ENCODE measurements at regions of chrX and their contacts with region 1.

Region 1: DNA sequence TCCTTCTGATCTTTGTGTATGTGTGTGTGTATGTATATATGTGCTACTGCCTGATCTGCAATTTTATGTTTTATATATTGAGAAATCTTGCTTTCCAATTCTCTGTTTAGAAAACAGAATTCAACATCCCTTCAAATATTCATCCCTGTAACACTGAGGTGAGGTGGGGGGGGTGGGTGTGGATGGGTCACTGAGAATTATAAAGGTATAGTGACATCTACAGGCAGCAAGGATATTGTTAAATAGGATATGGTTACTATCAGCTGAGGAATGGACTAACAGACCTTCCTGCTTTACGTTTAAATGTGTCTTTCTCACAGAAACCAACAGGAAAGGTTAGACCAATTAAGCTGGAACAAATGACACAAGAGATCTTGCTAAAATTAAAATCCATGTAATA is 19.0 kb upstream of the MAGEB2 start:
- DNase-seq: no peak
- H3K4me3 ChIP-seq: no peak overlapping the region
- H3K27ac ChIP-seq: no peak overlapping the region
- H3K27me3 ChIP-seq: no peaks in the 10 kb centered on the region
- CTCF ChIP-seq: no peak

Region 2: GRCh38 chrX:30141966-30142365 is 54.4 kb before region 1 on chrX:
- CTCF ChIA-PET with region 1: interaction called, 19 read pairs
- POLR2A ChIA-PET with region 1: no interaction called
- DNase-seq: peak; percentile 13
- H3K4me3 ChIP-seq: no peak overlapping the region
- H3K27ac ChIP-seq: no peak overlapping the region
- H3K27me3 ChIP-seq: no peaks in the 10 kb centered on the region
- CTCF ChIP-seq: peak; percentile 48

Region 3: DNA sequence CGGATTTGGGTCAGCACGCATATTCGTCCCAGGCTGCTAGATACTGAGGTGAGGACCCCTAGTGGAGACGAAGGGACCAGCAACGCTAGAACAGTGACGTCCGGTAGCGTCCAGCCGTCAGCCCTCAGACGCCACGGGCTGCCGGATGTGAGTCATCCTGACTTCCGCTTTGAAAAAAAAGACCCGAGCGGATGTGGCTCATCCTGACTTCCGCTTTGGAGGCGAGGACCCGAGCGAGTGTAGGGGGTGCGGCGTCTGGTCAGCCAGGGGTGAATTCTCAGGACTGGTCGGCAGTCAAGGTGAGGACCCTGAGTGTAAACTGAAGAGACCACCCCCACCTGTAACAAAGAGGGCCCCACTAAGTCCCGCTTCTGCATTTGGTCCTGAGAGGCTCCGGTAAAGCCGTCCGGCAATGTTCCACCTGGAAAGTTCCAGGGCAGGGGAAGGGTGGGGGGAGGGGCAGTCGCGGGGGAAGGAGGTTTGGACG is 19.1 kb after region 1 on chrX and contains the start of gene MAGEB2:
- CTCF ChIA-PET with region 1: no interaction called
- POLR2A ChIA-PET with region 1: no interaction called
- DNase-seq: no peak
- H3K4me3 ChIP-seq: no peak within 1 kb of the TSS
- H3K27ac ChIP-seq: no peak within 1 kb of the TSS
- H3K27me3 ChIP-seq: no peaks in the 10 kb centered on the region
- CTCF ChIP-seq: no peak
- polyA plus RNA-seq, gene MAGEB2: not detected in 2 replicates

Measured in AG04450 (cell line).